ENCODE measurements at regions of chr6 and their contacts with region 1.

Region 1: DNA sequence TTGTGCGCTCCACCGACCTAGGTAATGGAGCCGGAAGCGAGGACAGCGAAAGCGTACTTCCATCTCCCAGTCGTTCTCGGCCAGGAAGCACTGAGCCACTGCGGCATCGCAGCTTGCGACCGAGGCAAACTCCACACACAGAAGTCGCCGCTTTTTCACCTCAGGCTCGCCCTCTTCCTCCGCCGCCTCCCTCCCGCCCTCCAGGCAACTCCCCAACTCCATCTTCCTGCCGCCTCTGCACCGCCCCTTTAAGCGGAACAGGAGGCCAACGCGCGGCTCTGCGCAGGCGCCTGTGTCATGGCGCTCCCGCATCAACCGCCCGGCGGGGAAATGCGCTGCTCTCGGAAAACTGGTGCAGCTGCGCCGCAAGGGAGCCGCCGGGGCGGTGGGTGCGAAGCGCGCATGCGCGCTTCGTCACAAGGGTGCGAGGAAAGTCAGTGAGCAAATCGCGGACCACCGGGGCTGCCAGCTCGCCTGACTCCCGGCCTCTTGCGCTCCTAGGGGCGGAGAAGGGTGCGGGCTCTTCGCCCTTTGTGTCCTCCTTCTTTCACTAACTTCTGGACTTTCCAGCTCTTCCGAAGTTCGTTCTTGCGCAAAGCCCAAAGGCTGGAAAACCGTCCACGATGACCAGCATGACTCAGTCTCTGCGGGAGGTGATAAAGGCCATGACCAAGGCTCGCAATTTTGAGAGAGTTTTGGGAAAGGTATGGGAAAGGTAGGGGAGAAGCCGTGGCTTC is at the starts of genes ACOT13 and TDP2:
- DNase-seq: peak; percentile 86 to 97 (median 92)
- H3K4me3 ChIP-seq: peak within 1 kb of the TSS; percentile 62 to 100 (median 93)
- H3K27ac ChIP-seq: peak within 1 kb of the TSS; percentile 62 to 97 (median 87)
- H3K27me3 ChIP-seq: no peaks in the 10 kb centered on the region
- CTCF ChIP-seq: peak in 52 of 56 donors; percentile 12 to 72 (median 49)
- total RNA-seq, gene ACOT13: 13.5 to 34.9 (median 23.7) TPM
- total RNA-seq, gene TDP2: 32.5 to 61.2 (median 49.0) TPM

Region 2: DNA sequence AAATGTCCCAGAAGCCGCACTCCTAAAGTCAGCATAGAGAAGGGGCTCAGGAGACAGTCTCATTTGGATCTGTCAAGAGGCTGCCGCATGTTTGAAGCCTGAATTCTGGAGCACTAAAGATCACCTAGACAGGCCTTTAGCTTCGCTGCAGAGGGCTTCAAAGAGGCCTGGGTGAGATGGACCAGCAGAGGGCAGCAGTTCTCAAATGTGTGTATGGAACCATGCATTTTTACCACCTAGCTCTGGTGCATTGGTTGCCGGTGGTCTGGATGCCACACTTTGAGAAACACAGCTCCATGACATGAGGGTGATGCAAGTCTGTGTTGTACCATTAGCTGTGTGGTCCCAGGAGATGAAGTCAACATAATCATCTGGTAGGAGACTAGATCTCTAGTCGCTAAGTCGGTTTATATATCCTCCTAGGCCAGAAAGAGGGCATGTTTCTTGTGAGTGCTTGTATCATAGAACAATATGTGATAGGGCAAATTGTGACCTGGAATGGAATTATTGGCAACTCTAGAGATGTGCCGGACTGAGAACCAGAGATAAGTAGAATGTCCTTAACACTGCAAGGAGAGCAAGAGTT is 85.6 kb before region 1 on chr6:
- intact Hi-C with region 1: loop called (anchors 5 kb)
- DNase-seq: peak; percentile 57 to 87 (median 76)
- H3K4me3 ChIP-seq: no peak overlapping the region
- H3K27ac ChIP-seq: no peak overlapping the region
- H3K27me3 ChIP-seq: no peaks in the 10 kb centered on the region
- CTCF ChIP-seq: peak; percentile 61 to 92 (median 83)

Region 3: GRCh38 chr6:24646782-24647181 is 20.0 kb before region 1 on chr6:
- intact Hi-C with region 1: loop called (anchors 1 kb)
- DNase-seq: no peak
- H3K4me3 ChIP-seq: peak overlapping the region in 32 of 59 donors; percentile 52 to 96 (median 80)
- H3K27ac ChIP-seq: peak overlapping the region in 31 of 59 donors; percentile 19 to 87 (median 66)
- H3K27me3 ChIP-seq: no peaks in the 10 kb centered on the region
- CTCF ChIP-seq: no peak

Region 4: GRCh38 chr6:24720604-24721460 is 54.0 kb after region 1 on chr6:
- intact Hi-C with region 1: loop called (anchors 2 to 5 kb)
- DNase-seq: peak; percentile 99 to 100 (median 99)
- H3K4me3 ChIP-seq: peak overlapping the region; percentile 63 to 100 (median 95)
- H3K27ac ChIP-seq: peak overlapping the region; percentile 83 to 100 (median 99)
- H3K27me3 ChIP-seq: no peaks in the 10 kb centered on the region
- CTCF ChIP-seq: peak in 22 of 56 donors; percentile 6 to 35 (median 14)

Region 5: DNA sequence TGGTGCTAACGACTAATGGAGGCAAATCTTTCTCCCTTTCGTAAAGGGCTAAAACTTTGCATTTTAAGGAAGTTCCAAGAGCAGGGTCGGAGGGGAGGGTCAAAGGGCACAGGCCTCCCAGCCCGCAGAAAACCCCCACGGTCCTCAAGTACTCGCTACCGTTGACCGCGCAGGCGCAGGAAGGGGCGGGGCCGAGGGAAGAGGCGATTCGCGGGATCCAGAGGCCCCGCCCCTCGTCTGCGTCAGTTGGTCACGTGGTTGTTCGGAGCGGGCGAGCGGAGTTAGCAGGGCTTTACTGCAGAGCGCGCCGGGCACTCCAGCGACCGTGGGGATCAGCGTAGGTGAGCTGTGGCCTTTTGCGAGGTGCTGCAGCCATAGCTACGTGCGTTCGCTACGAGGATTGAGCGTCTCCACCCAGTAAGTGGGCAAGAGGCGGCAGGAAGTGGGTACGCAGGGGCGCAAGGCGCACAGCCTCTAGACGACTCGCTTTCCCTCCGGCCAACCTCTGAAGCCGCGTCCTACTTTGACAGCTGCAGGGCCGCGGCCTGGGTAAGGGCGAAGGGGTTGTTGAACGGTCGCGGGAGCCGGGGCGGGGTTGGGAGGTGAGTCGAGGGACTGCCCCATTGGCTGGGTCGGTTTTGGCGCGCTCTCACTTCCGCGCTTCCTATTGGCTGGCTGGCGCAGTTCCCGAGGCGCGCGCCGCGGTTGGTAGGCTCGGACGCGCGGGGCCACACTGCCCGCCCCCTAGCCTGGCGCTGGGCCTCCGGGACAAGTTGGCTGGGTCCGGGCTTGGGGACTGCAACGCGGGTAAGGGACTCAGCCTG is 108.1 kb after region 1 on chr6 and contains the start of gene GMNN:
- intact Hi-C with region 1: loop called in 1 of 2 experiments (anchors 5 kb)
- DNase-seq: peak; percentile 96 to 99 (median 98)
- H3K4me3 ChIP-seq: peak within 1 kb of the TSS; percentile 74 to 100 (median 98)
- H3K27ac ChIP-seq: peak within 1 kb of the TSS; percentile 73 to 99 (median 96)
- H3K27me3 ChIP-seq: no peaks in the 10 kb centered on the region
- CTCF ChIP-seq: peak in 24 of 56 donors; percentile 7 to 38 (median 22)
- total RNA-seq, gene GMNN: 7.1 to 41.6 (median 15.2) TPM